ENCODE measurements at regions of chr1 and their contacts with region 1.

Region 1: DNA sequence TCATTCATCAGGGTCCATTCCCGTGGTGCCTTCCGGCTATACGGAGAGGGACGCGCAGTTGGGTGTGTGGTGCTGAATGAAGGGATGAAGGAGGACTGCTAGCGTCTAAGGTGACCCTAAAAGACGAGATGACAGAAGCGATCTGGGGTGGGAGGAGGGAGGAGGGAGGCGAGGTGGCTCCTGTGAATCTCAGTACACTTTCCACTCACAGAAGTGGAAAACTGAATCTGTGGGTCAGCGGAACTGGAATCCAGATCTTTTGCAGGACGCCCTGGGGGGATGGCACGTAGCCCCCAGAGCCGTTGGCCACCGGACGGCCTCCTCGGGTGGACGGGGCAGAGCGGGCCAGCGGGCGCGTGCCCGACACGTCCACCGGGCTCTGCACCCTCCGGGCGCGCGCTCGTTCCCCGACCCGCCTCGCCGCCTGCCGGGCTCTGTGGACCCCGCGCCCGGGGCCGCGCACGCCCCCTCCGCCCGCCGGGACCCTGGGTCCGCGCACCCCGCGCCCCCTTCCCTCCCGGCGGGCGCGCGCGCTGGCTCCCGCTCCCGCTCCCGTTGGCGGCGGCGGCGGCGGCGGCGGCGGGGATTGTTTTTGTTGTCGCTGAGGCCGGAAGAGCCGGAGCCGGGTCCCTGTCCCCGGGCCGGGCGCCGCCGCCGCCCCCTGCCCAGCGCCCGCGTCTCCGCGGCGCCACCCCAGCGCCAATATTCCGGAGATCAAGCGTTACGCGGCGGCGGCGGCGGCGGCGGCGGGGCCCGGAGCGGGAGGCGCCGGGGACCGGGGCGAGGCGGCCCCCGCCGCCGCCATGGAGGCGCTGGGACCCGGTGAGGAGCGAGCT is at the start of gene AGO4:
- DNase-seq: peak in 1 of 2 experiments; percentile 52
- H3K4me3 ChIP-seq: peak within 1 kb of the TSS; percentile 75
- H3K27ac ChIP-seq: no peak within 1 kb of the TSS
- H3K4me1 ChIP-seq: peaks cover 13% of the 10 kb centered on the region
- H3K27me3 ChIP-seq: no peaks in the 10 kb centered on the region
- CTCF ChIP-seq: no peak
- total RNA-seq, gene AGO4: 12.4 and 12.9 TPM in 2 replicates

Region 2: DNA sequence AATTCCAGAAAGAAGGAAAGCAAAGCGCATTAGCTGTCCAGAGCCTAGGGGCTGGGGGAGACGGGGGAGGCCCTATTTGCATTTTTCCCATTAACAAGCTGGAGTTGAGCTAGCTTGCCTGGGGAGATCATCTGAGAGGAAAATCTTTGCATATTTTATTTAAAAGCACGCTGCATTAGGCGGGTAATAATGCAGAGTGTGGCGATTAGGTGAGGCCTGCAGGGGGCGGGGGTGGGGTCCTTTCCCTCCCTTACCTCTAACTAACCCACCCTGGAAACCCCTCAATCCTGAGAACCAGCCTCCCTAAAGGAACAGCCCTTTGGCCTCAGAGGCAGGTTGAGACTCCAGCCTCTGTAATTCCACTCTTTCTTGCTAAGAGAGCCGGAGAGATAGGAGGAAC is 105.3 kb before region 1 on chr1:
- CTCF ChIA-PET with region 1: interaction called, 17 read pairs
- POLR2A ChIA-PET with region 1: no interaction called
- intact Hi-C with region 1: no loop called
- DNase-seq: no peak
- H3K4me3 ChIP-seq: no peak overlapping the region
- H3K27ac ChIP-seq: no peak overlapping the region
- H3K4me1 ChIP-seq: no peaks in the 10 kb centered on the region
- H3K27me3 ChIP-seq: peaks cover 71% of the 10 kb centered on the region
- CTCF ChIP-seq: no peak

Region 3: DNA sequence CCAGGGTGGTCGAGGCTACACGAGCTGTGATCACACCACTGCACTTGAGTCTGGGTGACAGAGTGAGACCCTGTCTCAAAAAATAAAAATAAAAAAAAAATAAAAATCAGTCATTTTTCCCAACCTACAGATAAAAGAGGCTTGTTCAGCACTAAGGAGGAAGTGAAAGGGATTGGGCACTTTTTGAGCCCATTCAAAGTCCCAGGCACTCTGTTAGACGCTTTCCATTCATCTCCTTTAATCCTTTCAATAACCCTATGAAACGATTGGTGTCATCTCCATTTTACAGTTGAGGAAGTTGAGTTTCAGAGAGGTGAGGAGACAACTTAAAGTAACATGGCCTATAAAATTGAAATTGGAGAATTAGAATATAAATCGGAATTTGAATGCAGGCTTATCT is 10.5 kb before region 1 on chr1:
- CTCF ChIA-PET with region 1: no interaction called
- POLR2A ChIA-PET with region 1: no interaction called
- intact Hi-C with region 1: no loop called
- DNase-seq: no peak
- H3K4me3 ChIP-seq: no peak overlapping the region
- H3K27ac ChIP-seq: no peak overlapping the region
- H3K4me1 ChIP-seq: no peaks in the 10 kb centered on the region
- H3K27me3 ChIP-seq: no peaks in the 10 kb centered on the region
- CTCF ChIP-seq: no peak

Region 4: DNA sequence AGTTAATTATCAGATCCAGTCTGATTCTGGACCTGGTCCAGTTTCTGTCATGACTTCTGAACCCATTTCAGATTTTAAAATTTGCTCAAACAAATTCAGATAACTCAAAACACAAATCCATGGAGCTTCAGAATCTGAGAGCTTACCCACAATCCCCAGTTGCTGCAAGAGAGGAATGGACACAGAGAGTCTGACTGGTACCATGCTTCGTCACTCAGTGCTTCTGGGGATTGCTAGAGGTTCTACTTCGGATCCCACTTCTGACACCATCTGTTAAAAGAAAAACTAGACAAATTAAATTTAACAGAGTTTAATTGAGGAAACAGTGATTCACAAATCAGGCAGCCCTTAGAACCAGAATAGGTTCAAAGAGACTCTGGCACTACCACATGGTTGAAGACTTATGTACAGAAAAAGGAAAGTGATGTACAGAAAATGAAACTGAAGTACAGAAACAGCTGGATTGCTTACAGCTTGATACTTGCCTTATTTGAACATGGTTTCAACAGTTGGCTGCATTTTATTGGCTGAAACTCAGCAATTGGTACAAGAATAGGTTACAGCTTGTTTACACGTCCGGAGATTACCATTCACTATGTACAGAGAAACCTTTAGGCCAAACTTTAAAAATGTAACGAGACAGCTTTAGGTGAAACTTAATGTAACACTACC is 215.4 kb after region 1 on chr1:
- CTCF ChIA-PET with region 1: no interaction called
- POLR2A ChIA-PET with region 1: interaction called, 22 read pairs
- intact Hi-C with region 1: no loop called
- DNase-seq: no peak
- H3K4me3 ChIP-seq: no peak overlapping the region
- H3K27ac ChIP-seq: no peak overlapping the region
- H3K4me1 ChIP-seq: peaks cover 26% of the 10 kb centered on the region
- H3K27me3 ChIP-seq: no peaks in the 10 kb centered on the region
- CTCF ChIP-seq: no peak

Measured in PC-9 (cell line).